MCF 10A (cell line): ENCODE measurements at regions of chr1 and their contacts with region 1.

Region 1: DNA sequence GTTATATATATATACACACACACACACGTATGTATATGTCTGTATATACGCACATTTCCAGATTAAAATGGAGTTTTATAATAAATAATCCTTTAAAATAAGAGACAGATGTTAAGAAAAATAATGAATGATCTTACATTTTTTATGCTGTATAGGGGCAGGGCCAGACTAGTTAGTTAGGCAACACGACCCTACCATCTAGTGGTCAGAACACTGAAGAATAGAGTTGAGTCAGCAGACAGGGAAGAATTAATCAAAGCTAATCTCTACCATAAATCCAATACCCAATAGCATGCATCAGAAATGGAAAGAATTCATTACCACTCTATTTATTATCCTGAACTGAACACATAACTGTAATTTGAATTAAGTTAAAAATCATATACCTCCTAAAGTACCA is 156.7 kb downstream of the BRINP3 start:
- DNase-seq: peak; percentile 64
- H3K4me3 Mint-ChIP-seq: no peak overlapping the region
- H3K27ac Mint-ChIP-seq: no peak overlapping the region
- H3K4me1 Mint-ChIP-seq: no peaks in the 10 kb centered on the region
- H3K27me3 Mint-ChIP-seq: no peaks in the 10 kb centered on the region
- CTCF ChIP-seq: peak; percentile 67

Region 2: GRCh38 chr1:189429610-189430009 is 891.3 kb before region 1 on chr1:
- CTCF ChIA-PET with region 1: interaction called, 3 read pairs
- POLR2A ChIA-PET with region 1: no interaction called
- intact Hi-C with region 1: loop called (anchors 5 kb)
- DNase-seq: peak; percentile 68
- H3K4me3 Mint-ChIP-seq: no peak overlapping the region
- H3K27ac Mint-ChIP-seq: no peak overlapping the region
- H3K4me1 Mint-ChIP-seq: peaks cover 6% of the 10 kb centered on the region
- H3K27me3 Mint-ChIP-seq: no peaks in the 10 kb centered on the region
- CTCF ChIP-seq: peak; percentile 79

Region 3: GRCh38 chr1:189619682-189620332 is 701.1 kb before region 1 on chr1:
- CTCF ChIA-PET with region 1: interaction called, 3 read pairs
- POLR2A ChIA-PET with region 1: interaction called, 3 read pairs
- intact Hi-C with region 1: loop called (anchors 1 kb)
- DNase-seq: peak; percentile 100
- H3K4me3 Mint-ChIP-seq: no peak overlapping the region
- H3K27ac Mint-ChIP-seq: peak overlapping the region; percentile 61
- H3K4me1 Mint-ChIP-seq: peaks cover 17% of the 10 kb centered on the region
- H3K27me3 Mint-ChIP-seq: no peaks in the 10 kb centered on the region
- CTCF ChIP-seq: peak; percentile 32

Region 4: DNA sequence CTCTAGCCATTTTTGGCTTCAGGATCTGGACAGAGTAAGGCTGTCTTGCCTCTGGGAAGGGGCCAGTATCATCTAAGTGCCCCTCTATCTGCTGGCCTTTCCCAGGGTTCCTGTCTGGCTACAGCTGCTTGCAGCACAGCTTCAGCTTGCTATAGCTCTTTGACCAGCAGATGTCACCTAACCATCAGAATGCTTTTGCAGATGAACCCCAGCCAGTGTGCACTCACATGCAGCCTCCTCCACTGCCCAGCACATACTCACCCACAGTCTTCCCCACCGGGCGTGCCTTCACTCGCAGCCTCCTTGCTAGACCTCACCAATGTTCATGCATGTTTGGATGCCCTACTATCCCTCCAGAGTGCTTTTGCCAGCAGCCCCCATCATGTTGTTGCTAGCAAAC is 612.3 kb before region 1 on chr1:
- CTCF ChIA-PET with region 1: interaction called, 8 read pairs
- POLR2A ChIA-PET with region 1: no interaction called
- intact Hi-C with region 1: loop called (anchors 2 kb)
- DNase-seq: peak; percentile 35
- H3K4me3 Mint-ChIP-seq: no peak overlapping the region
- H3K27ac Mint-ChIP-seq: no peak overlapping the region
- H3K4me1 Mint-ChIP-seq: no peaks in the 10 kb centered on the region
- H3K27me3 Mint-ChIP-seq: no peaks in the 10 kb centered on the region
- CTCF ChIP-seq: peak; percentile 16

Region 5: DNA sequence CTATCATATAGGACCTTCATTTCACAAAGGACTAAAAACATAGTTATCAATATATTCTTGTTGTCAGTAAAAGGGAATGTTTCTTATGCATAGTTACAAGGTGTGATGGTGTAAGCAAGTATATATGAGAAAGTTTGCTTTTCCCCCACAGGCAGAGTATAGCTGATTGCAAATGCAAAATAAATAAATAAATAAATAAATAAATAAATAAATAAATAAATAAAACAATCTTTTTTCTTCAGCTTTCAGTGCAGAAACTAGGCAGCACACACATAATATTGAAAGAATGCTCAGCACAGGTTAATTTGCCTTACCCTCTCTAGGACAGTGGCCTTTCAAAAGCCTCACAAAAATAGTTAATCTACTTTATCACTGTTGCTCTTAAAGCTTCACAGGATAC is 17.9 kb after region 1 on chr1:
- CTCF ChIA-PET with region 1: no interaction called
- POLR2A ChIA-PET with region 1: no interaction called
- intact Hi-C with region 1: no loop called
- DNase-seq: no peak
- H3K4me3 Mint-ChIP-seq: no peak overlapping the region
- H3K27ac Mint-ChIP-seq: no peak overlapping the region
- H3K4me1 Mint-ChIP-seq: no peaks in the 10 kb centered on the region
- H3K27me3 Mint-ChIP-seq: no peaks in the 10 kb centered on the region
- CTCF ChIP-seq: no peak

Region 6: DNA sequence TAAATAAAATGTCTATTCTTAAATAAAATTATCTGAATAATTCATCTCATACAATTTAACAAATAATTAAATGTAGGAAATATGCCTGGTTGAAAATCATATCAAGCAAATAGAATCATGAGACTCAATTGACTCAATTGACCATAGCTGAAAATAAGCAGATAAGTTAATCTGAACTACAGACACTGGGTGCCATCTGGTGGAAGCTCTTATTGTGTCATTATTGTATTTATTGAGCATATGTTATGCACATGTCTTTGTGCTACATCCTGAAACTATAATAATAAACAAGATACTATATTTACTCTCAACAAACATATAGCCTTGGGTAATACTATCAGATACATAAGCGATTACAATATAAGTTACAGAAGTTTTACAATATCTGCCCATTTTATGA is 115.7 kb after region 1 on chr1:
- CTCF ChIA-PET with region 1: interaction called, 4 read pairs
- POLR2A ChIA-PET with region 1: no interaction called
- intact Hi-C with region 1: loop called (anchors 2 kb)
- DNase-seq: peak; percentile 72
- H3K4me3 Mint-ChIP-seq: no peak overlapping the region
- H3K27ac Mint-ChIP-seq: no peak overlapping the region
- H3K4me1 Mint-ChIP-seq: no peaks in the 10 kb centered on the region
- H3K27me3 Mint-ChIP-seq: no peaks in the 10 kb centered on the region
- CTCF ChIP-seq: peak; percentile 69

Region 7: GRCh38 chr1:191405417-191405816 is 1084.5 kb after region 1 on chr1:
- CTCF ChIA-PET with region 1: no interaction called
- POLR2A ChIA-PET with region 1: no interaction called
- intact Hi-C with region 1: no loop called
- DNase-seq: no peak
- H3K4me3 Mint-ChIP-seq: no peak overlapping the region
- H3K27ac Mint-ChIP-seq: no peak overlapping the region
- H3K4me1 Mint-ChIP-seq: no peaks in the 10 kb centered on the region
- H3K27me3 Mint-ChIP-seq: no peaks in the 10 kb centered on the region
- CTCF ChIP-seq: no peak